ENCODE measurements at regions of chr1 and their contacts with region 1.

Region 1: GRCh38 chr1:201436393-201436792 is 14.9 kb upstream of the TNNI1 start:
- DNase-seq: no peak
- H3K4me3 ChIP-seq: no peak overlapping the region
- H3K27ac ChIP-seq: no peak overlapping the region
- H3K4me1 ChIP-seq: peaks cover 19% of the 10 kb centered on the region
- H3K27me3 ChIP-seq: no peaks in the 10 kb centered on the region
- CTCF ChIP-seq: no peak

Region 2: GRCh38 chr1:201261771-201262465 is 174.5 kb before region 1 on chr1:
- CTCF ChIA-PET with region 1: interaction called, 12 read pairs
- POLR2A ChIA-PET with region 1: no interaction called
- intact Hi-C with region 1: no loop called
- DNase-seq: no peak
- H3K4me3 ChIP-seq: no peak overlapping the region
- H3K27ac ChIP-seq: no peak overlapping the region
- H3K4me1 ChIP-seq: peaks cover 31% of the 10 kb centered on the region
- H3K27me3 ChIP-seq: no peaks in the 10 kb centered on the region
- CTCF ChIP-seq: no peak

Region 3: DNA sequence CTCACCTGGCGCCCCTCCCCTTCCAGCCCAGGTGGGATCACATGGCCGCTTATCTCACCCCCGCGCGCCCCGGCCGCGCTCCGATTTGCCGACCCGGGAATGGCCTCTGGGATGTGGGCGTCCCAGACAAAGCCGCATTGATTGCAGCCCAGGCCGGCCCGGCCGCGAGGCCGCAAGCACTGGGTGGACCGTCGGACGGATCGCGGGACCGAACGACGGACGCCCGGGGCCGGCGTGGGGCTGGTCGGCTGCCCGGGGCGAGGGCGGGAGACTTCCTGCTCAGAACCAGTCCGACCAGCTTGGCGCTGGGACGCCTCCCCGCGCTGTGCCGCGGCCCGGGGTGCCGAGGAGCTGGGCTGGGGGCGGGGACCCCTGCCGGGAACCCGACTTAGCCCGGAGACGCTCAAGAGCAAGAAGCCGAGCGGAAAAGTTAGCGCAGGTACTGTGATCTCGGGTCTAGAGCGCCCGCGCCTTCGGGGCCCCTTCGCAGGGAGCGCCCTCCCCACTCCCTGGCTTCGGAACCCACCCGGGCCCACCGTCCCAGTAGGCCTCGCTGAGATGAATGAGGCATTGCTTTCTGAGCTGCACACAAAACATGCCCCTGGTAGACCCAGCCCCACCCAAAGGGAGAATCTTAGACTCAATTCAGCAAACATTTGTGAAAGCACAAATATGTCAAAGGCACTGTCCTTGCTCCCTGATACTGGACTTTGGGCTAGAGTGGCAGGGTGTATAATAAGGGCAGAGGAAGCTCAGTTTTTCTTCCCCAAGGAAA is 36.9 kb before region 1 on chr1:
- CTCF ChIA-PET with region 1: interaction called, 4 read pairs
- POLR2A ChIA-PET with region 1: no interaction called
- intact Hi-C with region 1: loop called (anchors 1 kb)
- DNase-seq: peak; percentile 70 to 79
- H3K4me3 ChIP-seq: peak overlapping the region; percentile 96
- H3K27ac ChIP-seq: peak overlapping the region; percentile 61
- H3K4me1 ChIP-seq: peaks cover 42% of the 10 kb centered on the region
- H3K27me3 ChIP-seq: no peaks in the 10 kb centered on the region
- CTCF ChIP-seq: no peak

Region 4: GRCh38 chr1:201468844-201469511 is 32.6 kb after region 1 on chr1 and contains the start of gene PHLDA3:
- CTCF ChIA-PET with region 1: interaction called, 5 read pairs
- POLR2A ChIA-PET with region 1: interaction called, 10 read pairs
- intact Hi-C with region 1: loop called (anchors 2 kb)
- DNase-seq: peak; percentile 63 to 85
- H3K4me3 ChIP-seq: peak within 1 kb of the TSS; percentile 97
- H3K27ac ChIP-seq: peak within 1 kb of the TSS; percentile 95
- H3K4me1 ChIP-seq: peaks cover 31% of the 10 kb centered on the region
- H3K27me3 ChIP-seq: no peaks in the 10 kb centered on the region
- CTCF ChIP-seq: no peak
- total RNA-seq, gene PHLDA3: 31.6 and 46.4 TPM in 2 replicates

Region 5: DNA sequence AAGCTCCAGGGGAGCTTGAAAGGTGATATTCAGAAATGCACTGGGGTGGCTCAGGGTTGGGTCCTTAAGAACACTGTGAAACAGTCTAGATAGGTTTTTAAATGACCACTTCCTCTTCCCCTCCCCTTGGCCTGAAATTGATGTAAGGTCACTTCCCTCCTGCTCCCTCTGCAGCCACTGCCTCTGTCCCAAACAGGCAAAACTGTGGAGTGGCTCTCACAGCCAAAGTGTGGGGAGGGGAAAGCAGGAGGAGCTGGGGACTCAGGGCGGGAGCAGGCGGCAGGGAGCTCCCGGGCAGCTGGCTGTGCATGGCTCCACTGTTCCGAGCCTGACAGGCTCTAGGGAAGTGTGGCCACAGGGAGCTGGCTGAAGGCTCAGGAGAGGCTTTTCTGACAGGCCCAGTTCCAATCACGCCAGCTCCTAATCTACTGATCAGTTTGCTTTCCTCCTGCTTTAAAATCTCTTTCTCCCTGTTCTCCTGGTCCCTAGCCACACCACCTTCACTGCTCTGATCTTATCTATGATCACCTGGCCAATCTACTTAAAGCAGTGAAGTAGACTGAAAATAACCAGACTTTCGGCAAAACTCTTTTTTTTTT is 75.6 kb after region 1 on chr1:
- CTCF ChIA-PET with region 1: interaction called, 15 read pairs
- POLR2A ChIA-PET with region 1: no interaction called
- intact Hi-C with region 1: loop called (anchors 2 kb)
- DNase-seq: peak in 1 of 2 experiments; percentile 24
- H3K4me3 ChIP-seq: no peak overlapping the region
- H3K27ac ChIP-seq: no peak overlapping the region
- H3K4me1 ChIP-seq: peaks cover 48% of the 10 kb centered on the region
- H3K27me3 ChIP-seq: no peaks in the 10 kb centered on the region
- CTCF ChIP-seq: no peak

Region 6: DNA sequence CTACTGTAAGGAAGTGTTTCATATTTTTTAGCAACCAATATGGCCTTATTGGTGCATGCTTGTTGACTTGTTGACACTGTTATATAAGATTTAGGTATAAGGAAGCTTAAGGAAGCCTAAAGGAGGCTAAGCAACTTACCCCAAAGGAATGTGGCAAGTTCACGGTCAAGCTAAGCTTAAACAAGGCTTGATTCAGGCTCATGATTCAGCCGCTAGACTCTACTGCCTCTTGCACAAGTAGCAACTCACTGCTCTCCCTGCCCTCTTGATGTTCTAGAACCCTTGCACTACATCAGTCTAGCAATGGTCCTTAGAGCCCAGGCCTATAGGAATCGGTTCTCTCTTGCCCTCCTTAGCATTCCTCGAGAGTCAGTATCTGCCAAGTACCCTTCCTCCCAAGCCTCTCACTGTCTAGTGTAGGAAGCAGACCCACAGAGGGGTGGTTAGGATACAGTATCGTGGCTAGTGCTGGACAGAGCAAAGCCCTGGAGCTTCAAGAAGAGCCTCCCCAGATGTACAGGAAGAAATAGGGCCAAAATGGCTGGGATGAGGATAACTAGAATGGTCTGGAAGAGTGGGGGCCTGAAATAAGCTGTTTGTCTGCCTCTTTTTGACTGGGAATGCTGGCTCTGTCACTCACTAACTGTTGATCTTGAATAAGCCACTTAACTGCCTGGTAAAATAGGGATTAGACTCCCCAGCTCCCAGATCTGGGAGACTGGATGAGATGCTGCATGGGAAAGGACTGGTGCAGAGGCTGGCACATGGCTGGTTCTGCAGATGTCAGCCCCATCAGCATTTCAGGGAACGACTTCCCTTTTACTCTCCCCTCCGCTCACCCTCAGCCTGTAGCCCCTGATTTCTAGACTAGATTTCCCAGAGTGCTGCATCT is 224.8 kb after region 1 on chr1:
- CTCF ChIA-PET with region 1: no interaction called
- POLR2A ChIA-PET with region 1: no interaction called
- intact Hi-C with region 1: no loop called
- DNase-seq: no peak
- H3K4me3 ChIP-seq: no peak overlapping the region
- H3K27ac ChIP-seq: no peak overlapping the region
- H3K4me1 ChIP-seq: no peaks in the 10 kb centered on the region
- H3K27me3 ChIP-seq: no peaks in the 10 kb centered on the region
- CTCF ChIP-seq: no peak

Measured in PC-9 (cell line).